ENCODE measurements at regions of chr6 and their contacts with region 1.

Region 1: DNA sequence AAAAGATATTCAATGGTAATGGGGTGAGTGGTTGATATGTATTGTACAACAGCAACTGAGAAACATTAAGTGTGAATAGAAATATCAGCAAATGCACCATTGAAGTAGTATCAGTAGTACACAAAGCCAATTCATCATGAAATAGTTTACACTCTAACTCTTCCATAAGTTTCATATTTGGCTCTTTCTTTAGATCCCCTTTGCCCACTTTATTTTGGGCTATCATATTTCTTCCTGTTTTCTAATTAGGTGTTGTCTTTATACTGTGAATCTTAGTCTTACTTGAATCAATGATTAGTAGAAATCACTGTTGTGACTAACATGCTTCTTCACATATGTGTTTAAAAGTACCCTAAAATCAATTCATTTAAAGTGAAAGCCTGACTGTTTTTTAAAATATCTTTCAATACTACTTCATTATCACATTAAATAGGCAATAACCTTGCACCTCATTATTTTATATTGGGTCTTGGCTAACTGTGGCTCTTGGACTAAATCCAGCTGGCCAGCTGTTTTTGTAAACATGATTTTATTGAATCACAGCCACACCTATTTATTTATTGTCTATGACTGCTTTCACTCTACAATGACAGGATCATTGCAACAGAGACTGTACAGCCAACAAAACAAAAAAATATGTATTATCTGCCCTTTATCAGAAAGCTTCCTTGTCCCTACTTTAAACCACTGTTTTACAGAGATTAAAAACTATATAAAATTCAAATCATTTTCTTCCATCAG is 38.9 kb downstream of the EYS start:
- DNase-seq: no peak
- H3K4me3 ChIP-seq: no peak overlapping the region
- H3K4me3 Mint-ChIP-seq: no peak overlapping the region
- H3K27ac ChIP-seq: no peak overlapping the region
- H3K27ac Mint-ChIP-seq: no peak overlapping the region
- H3K4me1 ChIP-seq: no peaks in the 10 kb centered on the region
- H3K4me1 Mint-ChIP-seq: no peaks in the 10 kb centered on the region
- H3K27me3 ChIP-seq: no peaks in the 10 kb centered on the region
- H3K27me3 Mint-ChIP-seq: no peaks in the 10 kb centered on the region
- CTCF ChIP-seq: no peak

Region 2: GRCh38 chr6:65448866-65449265 is 219.2 kb before region 1 on chr6:
- intact Hi-C with region 1: no loop called
- DNase-seq: no peak
- H3K4me3 ChIP-seq: no peak overlapping the region
- H3K4me3 Mint-ChIP-seq: no peak overlapping the region
- H3K27ac ChIP-seq: no peak overlapping the region
- H3K27ac Mint-ChIP-seq: no peak overlapping the region
- H3K4me1 ChIP-seq: no peaks in the 10 kb centered on the region
- H3K4me1 Mint-ChIP-seq: no peaks in the 10 kb centered on the region
- H3K27me3 ChIP-seq: no peaks in the 10 kb centered on the region
- H3K27me3 Mint-ChIP-seq: no peaks in the 10 kb centered on the region
- CTCF ChIP-seq: no peak

Region 3: GRCh38 chr6:65638047-65638842 is 29.8 kb before region 1 on chr6:
- intact Hi-C with region 1: loop called in 1 of 2 experiments (anchors 2 kb)
- DNase-seq: no peak
- H3K4me3 ChIP-seq: no peak overlapping the region
- H3K4me3 Mint-ChIP-seq: no peak overlapping the region
- H3K27ac ChIP-seq: no peak overlapping the region
- H3K27ac Mint-ChIP-seq: no peak overlapping the region
- H3K4me1 ChIP-seq: no peaks in the 10 kb centered on the region
- H3K4me1 Mint-ChIP-seq: peaks cover 10% of the 10 kb centered on the region
- H3K27me3 ChIP-seq: no peaks in the 10 kb centered on the region
- H3K27me3 Mint-ChIP-seq: no peaks in the 10 kb centered on the region
- CTCF ChIP-seq: no peak

Measured in CD14-positive monocyte (primary cell).